Activated CD4-positive, alpha-beta memory T cell treated with anti-CD3 and anti-CD28 coated beads for 36 hours (primary cell): ENCODE measurements at regions of chr4 and their contacts with region 1.

Region 1: GRCh38 chr4:122666527-122667245 is 45.8 kb upstream of the IL21 start:
- DNase-seq: no peak
- H3K4me3 Mint-ChIP-seq: peak overlapping the region; percentile 14
- H3K27ac Mint-ChIP-seq: peak overlapping the region; percentile 93
- H3K4me1 Mint-ChIP-seq: peaks cover 74% of the 10 kb centered on the region
- H3K27me3 Mint-ChIP-seq: no peaks in the 10 kb centered on the region

Region 2: DNA sequence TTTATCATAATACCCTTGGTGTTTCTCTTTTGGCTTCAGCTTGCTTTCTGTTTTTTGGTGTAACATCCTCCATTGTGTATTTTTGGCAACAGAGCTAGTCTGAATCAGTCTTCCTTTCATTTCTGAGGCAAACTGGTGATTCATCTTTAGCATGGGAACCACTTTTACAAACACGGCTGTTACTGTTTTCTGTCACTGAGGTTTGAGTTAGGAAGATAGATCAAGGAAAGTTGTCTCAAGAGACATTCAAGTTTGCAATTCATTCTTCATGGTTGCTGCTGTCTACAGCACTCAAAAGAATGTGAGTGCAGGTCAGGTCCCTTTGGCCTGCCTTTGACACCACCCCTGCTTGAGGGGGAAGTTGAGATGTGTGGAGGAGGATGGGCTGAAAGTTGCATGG is 82.2 kb before region 1 on chr4:
- CTCF ChIA-PET with region 1: no interaction called
- POLR2A ChIA-PET with region 1: no interaction called
- intact Hi-C with region 1: loop called (anchors 2 kb)
- DNase-seq: peak; percentile 23
- H3K4me3 Mint-ChIP-seq: peak overlapping the region; percentile 21
- H3K27ac Mint-ChIP-seq: peak overlapping the region; percentile 88
- H3K4me1 Mint-ChIP-seq: peaks cover 46% of the 10 kb centered on the region
- H3K27me3 Mint-ChIP-seq: no peaks in the 10 kb centered on the region

Region 3: GRCh38 chr4:122617597-122618593 is 48.8 kb before region 1 on chr4:
- CTCF ChIA-PET with region 1: interaction called, 6 read pairs
- POLR2A ChIA-PET with region 1: interaction called, 10 read pairs
- intact Hi-C with region 1: loop called (anchors 1 kb)
- DNase-seq: no peak
- H3K4me3 Mint-ChIP-seq: peak overlapping the region; percentile 76
- H3K27ac Mint-ChIP-seq: peak overlapping the region; percentile 87
- H3K4me1 Mint-ChIP-seq: peaks cover 70% of the 10 kb centered on the region
- H3K27me3 Mint-ChIP-seq: no peaks in the 10 kb centered on the region

Region 4: GRCh38 chr4:122689972-122690371 is 23.3 kb after region 1 on chr4:
- CTCF ChIA-PET with region 1: interaction called, 4 read pairs
- POLR2A ChIA-PET with region 1: no interaction called
- intact Hi-C with region 1: loop called (anchors 1 kb)
- DNase-seq: peak; percentile 58
- H3K4me3 Mint-ChIP-seq: no peak overlapping the region
- H3K27ac Mint-ChIP-seq: peak overlapping the region; percentile 16
- H3K4me1 Mint-ChIP-seq: peaks cover 57% of the 10 kb centered on the region
- H3K27me3 Mint-ChIP-seq: peaks cover 8% of the 10 kb centered on the region

Region 5: DNA sequence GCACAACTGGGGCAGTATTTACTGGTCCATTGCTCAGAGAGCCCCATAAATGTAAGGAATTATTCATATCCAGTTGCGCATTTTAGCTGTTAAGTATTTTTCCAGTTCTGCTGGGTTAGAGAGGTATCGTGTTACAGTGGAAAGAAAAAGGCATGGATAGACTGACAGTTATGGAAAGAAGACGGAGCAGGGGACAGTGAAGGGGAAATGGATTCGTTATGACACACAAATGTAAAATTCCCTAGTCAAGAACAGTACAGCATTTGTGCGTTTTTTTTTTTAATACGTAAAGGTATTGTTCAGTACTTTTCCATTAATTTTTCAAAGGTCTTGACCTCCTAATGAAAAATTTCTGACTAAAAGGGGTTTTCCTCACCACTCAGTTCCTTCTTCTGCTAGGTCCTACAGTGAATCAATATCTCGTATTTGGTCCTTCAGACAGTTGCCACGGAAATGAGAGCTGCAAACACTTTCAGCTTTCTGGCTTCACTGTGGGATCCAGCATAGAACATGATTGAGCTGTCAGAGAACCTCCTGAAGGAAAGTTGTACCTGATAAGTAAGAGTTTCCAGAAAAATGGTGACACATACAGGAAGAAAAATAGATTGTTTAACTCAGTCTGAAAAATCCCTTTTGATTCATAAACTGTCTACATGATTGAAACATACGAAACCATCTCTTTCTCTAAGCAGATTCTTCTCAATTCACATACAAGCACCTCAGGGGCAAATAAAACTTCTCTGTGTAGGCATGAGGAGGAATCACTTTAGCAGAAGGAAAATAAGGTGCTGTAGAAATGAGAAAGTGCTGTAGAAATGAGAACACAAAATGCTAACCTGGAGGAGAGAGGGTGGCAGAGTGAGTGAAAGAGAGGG is 44.0 kb after region 1 on chr4:
- CTCF ChIA-PET with region 1: interaction called, 4 read pairs
- POLR2A ChIA-PET with region 1: interaction called, 6 read pairs
- intact Hi-C with region 1: loop called (anchors 1 kb)
- DNase-seq: peak; percentile 73
- H3K4me3 Mint-ChIP-seq: peak overlapping the region; percentile 60
- H3K27ac Mint-ChIP-seq: peak overlapping the region; percentile 94
- H3K4me1 Mint-ChIP-seq: peaks cover 72% of the 10 kb centered on the region
- H3K27me3 Mint-ChIP-seq: no peaks in the 10 kb centered on the region

Region 6: GRCh38 chr4:122764821-122765215 is 98.1 kb after region 1 on chr4:
- CTCF ChIA-PET with region 1: no interaction called
- POLR2A ChIA-PET with region 1: no interaction called
- intact Hi-C with region 1: no loop called
- DNase-seq: no peak
- H3K4me3 Mint-ChIP-seq: no peak overlapping the region
- H3K27ac Mint-ChIP-seq: peak overlapping the region; percentile 3
- H3K4me1 Mint-ChIP-seq: peaks cover 18% of the 10 kb centered on the region
- H3K27me3 Mint-ChIP-seq: no peaks in the 10 kb centered on the region

Region 7: DNA sequence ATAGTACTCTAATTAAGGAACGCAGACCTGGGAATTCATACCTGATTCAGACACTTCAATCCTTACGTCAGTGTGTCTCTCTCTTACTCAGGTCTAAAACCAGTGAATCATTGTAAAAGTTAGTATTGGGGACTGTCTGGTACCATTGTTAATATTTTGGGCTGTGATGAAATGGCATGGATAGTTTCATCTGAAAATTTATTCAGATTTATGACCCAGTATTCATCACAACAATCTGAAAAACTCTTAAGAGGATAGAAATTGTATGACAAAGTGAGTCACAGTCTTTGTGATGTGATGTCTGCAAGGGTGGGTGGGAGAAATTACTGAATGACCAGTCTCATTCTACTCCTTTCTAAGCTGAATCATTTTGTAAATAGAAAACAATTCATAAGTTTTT is 170.3 kb after region 1 on chr4:
- CTCF ChIA-PET with region 1: no interaction called
- POLR2A ChIA-PET with region 1: no interaction called
- intact Hi-C with region 1: no loop called
- DNase-seq: no peak
- H3K4me3 Mint-ChIP-seq: no peak overlapping the region
- H3K27ac Mint-ChIP-seq: no peak overlapping the region
- H3K4me1 Mint-ChIP-seq: no peaks in the 10 kb centered on the region
- H3K27me3 Mint-ChIP-seq: peaks cover 10% of the 10 kb centered on the region